ENCODE measurements at regions of chr3 and their contacts with region 1.

Region 1: DNA sequence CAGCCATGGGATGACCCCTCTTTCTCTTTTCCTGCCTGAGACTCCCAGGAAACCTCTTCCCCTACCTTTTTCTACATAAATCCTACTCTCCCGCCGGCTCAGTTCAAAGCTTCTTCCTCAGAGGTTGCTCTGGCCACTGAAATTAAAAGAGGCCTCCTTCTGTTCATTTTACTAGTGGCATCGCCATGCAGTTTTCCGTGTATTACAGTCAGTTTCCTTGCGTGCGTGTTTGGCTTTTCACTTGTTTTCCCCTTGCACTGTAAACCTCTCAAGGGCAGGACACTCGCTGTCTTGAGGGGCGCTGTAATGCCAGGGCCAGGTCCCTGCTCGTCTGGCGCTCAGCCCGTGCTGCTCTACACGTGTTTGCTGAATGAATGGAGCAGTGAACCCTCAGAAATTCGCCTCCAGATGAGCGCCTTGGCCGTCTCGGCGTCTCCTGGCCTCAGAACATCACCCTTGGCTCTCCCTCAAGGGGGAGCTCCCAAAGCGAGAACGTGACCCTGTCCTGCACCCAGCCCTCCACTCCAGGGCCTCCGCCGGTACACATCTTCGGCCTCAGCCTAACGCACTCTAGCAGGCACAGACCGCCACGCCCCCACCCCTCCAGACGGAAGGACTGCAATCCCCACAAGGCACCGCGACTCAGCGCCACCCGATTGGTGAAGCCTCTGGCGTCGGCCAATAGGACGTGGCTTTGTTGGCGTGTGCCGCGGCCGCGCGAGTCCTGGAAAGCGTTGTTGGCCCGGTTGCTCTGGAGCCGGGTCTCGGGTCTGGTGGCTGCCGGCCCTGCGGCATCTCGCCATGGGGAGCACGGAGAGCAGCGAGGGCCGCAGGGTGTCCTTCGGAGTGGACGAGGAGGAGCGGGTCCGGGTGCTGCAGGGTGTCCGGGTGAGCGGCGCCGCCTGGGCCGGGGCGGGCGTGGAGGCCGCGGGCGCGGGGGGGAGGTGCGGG is at the start of gene CHCHD6:
- DNase-seq: peak; percentile 93 to 98 (median 96)
- ATAC-seq: peak; percentile 94
- H3K4me3 ChIP-seq: peak within 1 kb of the TSS; percentile 81
- H3K4me3 Mint-ChIP-seq: peak within 1 kb of the TSS; percentile 98
- H3K27ac ChIP-seq: no peak within 1 kb of the TSS
- H3K27ac Mint-ChIP-seq: peak within 1 kb of the TSS; percentile 70
- H3K4me1 ChIP-seq: peaks cover 19% of the 10 kb centered on the region
- H3K4me1 Mint-ChIP-seq: peaks cover 31% of the 10 kb centered on the region
- H3K27me3 ChIP-seq: peaks cover 0 to 4% of the 10 kb centered on the region in 2 experiments
- H3K27me3 Mint-ChIP-seq: peaks cover 21% of the 10 kb centered on the region
- CTCF ChIP-seq: peak; percentile 25
- total RNA-seq, gene CHCHD6: 8.7 to 9.3 TPM

Region 2: DNA sequence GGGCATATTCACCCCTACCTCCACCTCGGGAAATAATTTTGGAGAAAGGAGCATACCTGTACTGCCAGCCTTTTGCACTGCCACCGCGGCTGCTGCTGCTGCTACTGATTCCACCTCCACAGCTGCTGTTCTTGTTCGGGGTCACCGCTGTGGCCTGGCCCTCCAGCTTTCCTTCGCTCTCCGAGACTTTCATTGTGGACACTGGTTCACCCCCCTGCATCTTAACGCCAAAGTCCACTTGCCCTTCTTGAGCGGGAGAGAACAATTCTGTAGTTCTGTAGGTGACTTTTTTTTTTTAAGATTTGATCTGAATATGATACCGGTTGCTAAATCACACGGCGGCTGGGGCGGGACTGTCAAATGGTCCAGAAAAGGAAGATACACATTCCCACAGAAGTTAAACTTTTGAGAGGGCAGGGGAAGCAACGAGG is 1109.2 kb before region 1 on chr3:
- CTCF ChIA-PET with region 1: no interaction called
- POLR2A ChIA-PET with region 1: no interaction called
- intact Hi-C with region 1: loop called in 1 of 2 experiments (anchors 10 kb)
- DNase-seq: no peak
- ATAC-seq: no peak
- H3K4me3 ChIP-seq: peak overlapping the region; percentile 92
- H3K4me3 Mint-ChIP-seq: peak overlapping the region; percentile 97
- H3K27ac ChIP-seq: peak overlapping the region; percentile 70 to 80
- H3K27ac Mint-ChIP-seq: peak overlapping the region; percentile 84
- H3K4me1 ChIP-seq: peaks cover 45% of the 10 kb centered on the region
- H3K4me1 Mint-ChIP-seq: peaks cover 46% of the 10 kb centered on the region
- H3K27me3 ChIP-seq: no peaks in the 10 kb centered on the region
- H3K27me3 Mint-ChIP-seq: no peaks in the 10 kb centered on the region
- CTCF ChIP-seq: no peak

Region 3: DNA sequence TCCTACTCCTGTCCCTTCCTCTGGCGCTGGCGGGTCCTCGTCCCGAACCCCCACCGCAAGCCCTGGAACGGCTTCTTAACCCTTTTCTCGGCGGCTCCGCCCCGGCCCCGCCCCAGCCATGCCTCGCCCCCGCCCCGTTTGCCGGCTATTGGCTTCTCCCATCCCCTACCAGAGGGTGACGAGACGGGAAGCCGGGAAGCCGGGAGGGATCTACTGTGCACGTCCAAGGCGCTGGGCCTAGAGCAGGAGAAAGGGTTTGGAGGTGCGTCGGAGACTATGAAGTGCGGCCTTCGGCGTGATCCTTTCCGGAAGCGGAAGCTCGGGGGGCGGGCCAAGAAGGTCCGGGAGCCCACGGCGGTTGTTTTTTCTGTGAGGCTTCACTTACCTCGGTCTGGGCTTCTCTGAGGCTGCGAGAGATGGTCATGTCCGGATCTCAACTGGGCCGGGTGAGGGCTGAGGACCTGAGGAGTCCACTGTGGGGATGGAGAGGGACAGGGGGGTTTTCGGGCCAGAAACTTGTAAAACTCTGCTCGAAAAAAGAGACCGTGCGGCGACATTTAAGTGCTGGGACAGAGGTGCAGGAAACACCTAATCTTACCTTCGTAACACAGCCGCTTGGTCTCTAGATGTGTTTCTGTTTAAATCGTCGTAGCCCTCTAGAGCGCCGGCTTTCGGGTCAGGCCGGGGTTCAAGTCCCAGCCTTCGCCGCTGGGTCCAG is 713.4 kb before region 1 on chr3:
- CTCF ChIA-PET with region 1: no interaction called
- POLR2A ChIA-PET with region 1: no interaction called
- intact Hi-C with region 1: loop called in 1 of 2 experiments (anchors 10 kb)
- DNase-seq: peak; percentile 48 to 85 (median 62)
- ATAC-seq: peak; percentile 88
- H3K4me3 ChIP-seq: peak overlapping the region; percentile 91
- H3K4me3 Mint-ChIP-seq: peak overlapping the region; percentile 98
- H3K27ac ChIP-seq: peak overlapping the region; percentile 73 to 87
- H3K27ac Mint-ChIP-seq: peak overlapping the region; percentile 99
- H3K4me1 ChIP-seq: peaks cover 8% of the 10 kb centered on the region
- H3K4me1 Mint-ChIP-seq: peaks cover 53% of the 10 kb centered on the region
- H3K27me3 ChIP-seq: no peaks in the 10 kb centered on the region
- H3K27me3 Mint-ChIP-seq: no peaks in the 10 kb centered on the region
- CTCF ChIP-seq: no peak

Region 4: GRCh38 chr3:126357295-126358037 is 346.3 kb before region 1 on chr3 and contains the start of gene KLF15:
- CTCF ChIA-PET with region 1: no interaction called
- POLR2A ChIA-PET with region 1: no interaction called
- intact Hi-C with region 1: loop called in 1 of 2 experiments (anchors 5 kb)
- DNase-seq: peak; percentile 42 to 88 (median 65)
- ATAC-seq: peak; percentile 91
- H3K4me3 ChIP-seq: peak within 1 kb of the TSS; percentile 65
- H3K4me3 Mint-ChIP-seq: peak within 1 kb of the TSS; percentile 93
- H3K27ac ChIP-seq: no peak within 1 kb of the TSS
- H3K27ac Mint-ChIP-seq: no peak within 1 kb of the TSS
- H3K4me1 ChIP-seq: peaks cover 24% of the 10 kb centered on the region
- H3K4me1 Mint-ChIP-seq: peaks cover 17% of the 10 kb centered on the region
- H3K27me3 ChIP-seq: peaks cover 45 to 49% of the 10 kb centered on the region in 2 experiments
- H3K27me3 Mint-ChIP-seq: peaks cover 58% of the 10 kb centered on the region
- CTCF ChIP-seq: no peak
- total RNA-seq, gene KLF15: 0.30 TPM in 1 of 2 experiments, not detected in the other

Region 5: DNA sequence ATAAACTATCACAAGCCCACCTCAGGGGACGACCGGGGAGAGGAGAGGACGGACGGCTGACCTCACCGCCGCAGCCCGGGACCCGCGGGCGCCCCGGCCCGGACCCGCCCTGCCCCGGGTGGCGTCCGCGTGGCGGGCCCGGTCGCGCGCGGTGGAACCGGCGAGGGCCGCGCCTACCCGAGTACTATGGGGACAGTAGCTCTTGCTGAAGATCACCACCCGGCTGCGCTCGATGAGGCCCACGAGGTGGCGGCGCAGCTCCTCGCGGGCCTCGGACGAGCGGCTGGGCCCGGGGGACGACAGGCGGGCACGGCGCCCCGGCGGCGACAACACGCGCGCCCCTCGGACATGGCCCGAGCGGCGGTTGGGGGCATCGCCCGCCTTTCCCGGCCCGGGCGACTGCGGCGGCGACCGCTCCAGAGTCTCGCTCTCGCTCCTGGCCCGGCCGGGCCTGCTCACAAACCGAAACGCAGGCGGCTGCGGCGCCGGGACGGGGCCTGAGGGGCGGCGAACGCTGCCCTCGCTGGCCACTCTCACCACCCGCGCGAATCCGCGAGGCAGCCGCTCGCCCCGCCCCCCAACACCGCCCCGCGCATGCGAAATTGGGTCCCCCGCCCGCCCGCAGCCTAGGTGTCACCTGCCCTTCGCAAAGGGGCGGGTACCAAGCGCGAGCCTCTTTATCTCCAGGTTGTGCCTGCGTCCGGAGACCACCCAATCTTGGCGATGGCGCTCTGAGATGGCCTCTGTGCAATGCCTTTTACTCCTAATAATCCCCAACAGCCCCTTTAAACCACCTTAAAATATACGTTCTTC is 49.0 kb before region 1 on chr3 and contains the start of gene TXNRD3:
- CTCF ChIA-PET with region 1: no interaction called
- POLR2A ChIA-PET with region 1: no interaction called
- intact Hi-C with region 1: loop called in 1 of 2 experiments (anchors 1 kb)
- DNase-seq: peak; percentile 58 to 86 (median 72)
- ATAC-seq: peak; percentile 90
- H3K4me3 ChIP-seq: peak within 1 kb of the TSS; percentile 48
- H3K4me3 Mint-ChIP-seq: peak within 1 kb of the TSS; percentile 89
- H3K27ac ChIP-seq: no peak within 1 kb of the TSS
- H3K27ac Mint-ChIP-seq: peak within 1 kb of the TSS; percentile 19
- H3K4me1 ChIP-seq: peaks cover 7% of the 10 kb centered on the region
- H3K4me1 Mint-ChIP-seq: peaks cover 11% of the 10 kb centered on the region
- H3K27me3 ChIP-seq: peaks cover 0 to 3% of the 10 kb centered on the region in 2 experiments
- H3K27me3 Mint-ChIP-seq: peaks cover 1% of the 10 kb centered on the region
- CTCF ChIP-seq: no peak
- total RNA-seq, gene TXNRD3: 1.0 to 1.5 TPM

Region 6: DNA sequence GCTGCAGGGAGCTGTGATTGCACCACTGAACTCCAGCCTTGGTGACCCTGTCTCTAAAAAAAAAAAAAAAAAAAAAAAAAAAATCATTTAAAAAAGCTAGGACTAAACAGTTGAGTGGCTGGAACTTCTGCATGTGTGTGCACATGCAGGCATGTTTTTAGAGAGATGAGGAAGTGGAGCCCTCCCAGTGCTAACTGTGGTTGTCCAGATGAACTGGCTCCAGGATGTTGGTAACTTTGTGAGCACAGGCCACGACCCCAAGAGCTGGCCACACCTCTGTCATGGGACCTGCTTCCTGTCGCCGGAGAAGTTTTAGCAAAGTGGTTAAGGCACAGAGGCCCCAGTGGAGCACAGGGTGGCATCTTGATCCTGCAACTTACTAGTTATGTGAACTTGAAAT is 27.3 kb after region 1 on chr3:
- CTCF ChIA-PET with region 1: no interaction called
- POLR2A ChIA-PET with region 1: no interaction called
- intact Hi-C with region 1: no loop called
- DNase-seq: peak in 3 of 14 experiments; percentile 3 to 19 (median 8)
- ATAC-seq: no peak
- H3K4me3 ChIP-seq: no peak overlapping the region
- H3K4me3 Mint-ChIP-seq: no peak overlapping the region
- H3K27ac ChIP-seq: no peak overlapping the region
- H3K27ac Mint-ChIP-seq: no peak overlapping the region
- H3K4me1 ChIP-seq: peaks cover 9% of the 10 kb centered on the region
- H3K4me1 Mint-ChIP-seq: peaks cover 4% of the 10 kb centered on the region
- H3K27me3 ChIP-seq: no peaks in the 10 kb centered on the region
- H3K27me3 Mint-ChIP-seq: no peaks in the 10 kb centered on the region
- CTCF ChIP-seq: no peak

Region 7: DNA sequence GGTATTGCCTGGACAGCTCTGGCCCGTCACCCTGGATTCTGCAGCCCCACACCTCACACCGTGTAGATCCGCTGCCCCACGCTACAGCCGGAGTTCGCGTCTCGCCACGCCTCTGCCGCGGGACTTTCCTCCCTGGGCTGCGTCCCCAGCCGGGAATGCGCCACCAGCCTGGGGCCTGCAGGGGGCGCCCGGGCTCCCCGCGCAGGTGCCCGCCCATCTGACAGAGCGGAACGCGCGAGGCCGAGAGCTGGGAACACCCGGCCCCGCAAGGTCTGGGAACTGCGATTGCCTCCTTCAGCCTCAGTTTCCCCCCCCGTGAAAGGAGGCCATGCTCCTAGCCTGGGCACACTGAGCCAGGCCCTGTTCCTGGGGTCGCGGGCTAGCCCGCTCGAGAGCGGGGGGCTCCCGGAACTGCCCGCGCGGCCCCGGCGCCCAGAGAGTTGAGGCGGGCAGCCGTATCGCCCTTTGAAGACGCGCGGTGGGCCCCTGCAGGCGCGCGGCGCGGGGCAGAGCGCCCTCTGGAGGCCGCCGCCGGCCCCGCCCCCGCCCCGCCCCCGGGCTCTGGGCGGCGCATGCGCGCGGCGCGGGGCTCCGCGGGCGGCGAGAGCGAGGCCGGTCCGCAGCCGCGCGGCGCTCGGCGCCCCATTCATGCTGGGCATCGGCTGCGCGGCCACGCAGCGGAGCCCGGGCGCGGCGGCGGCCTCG is 278.8 kb after region 1 on chr3 and contains the start of gene PLXNA1:
- CTCF ChIA-PET with region 1: interaction called, 4 read pairs
- POLR2A ChIA-PET with region 1: no interaction called
- intact Hi-C with region 1: loop called (anchors 1 kb)
- DNase-seq: peak; percentile 76 to 95 (median 85)
- ATAC-seq: peak; percentile 82
- H3K4me3 ChIP-seq: peak within 1 kb of the TSS; percentile 67
- H3K4me3 Mint-ChIP-seq: peak within 1 kb of the TSS; percentile 89
- H3K27ac ChIP-seq: peak within 1 kb of the TSS; percentile 88 to 90
- H3K27ac Mint-ChIP-seq: peak within 1 kb of the TSS; percentile 93
- H3K4me1 ChIP-seq: peaks cover 30% of the 10 kb centered on the region
- H3K4me1 Mint-ChIP-seq: peaks cover 15% of the 10 kb centered on the region
- H3K27me3 ChIP-seq: peaks cover 0 to 5% of the 10 kb centered on the region in 2 experiments
- H3K27me3 Mint-ChIP-seq: peaks cover 10% of the 10 kb centered on the region
- CTCF ChIP-seq: peak; percentile 99
- total RNA-seq, gene PLXNA1: 9.8 to 10.6 TPM

Region 8: DNA sequence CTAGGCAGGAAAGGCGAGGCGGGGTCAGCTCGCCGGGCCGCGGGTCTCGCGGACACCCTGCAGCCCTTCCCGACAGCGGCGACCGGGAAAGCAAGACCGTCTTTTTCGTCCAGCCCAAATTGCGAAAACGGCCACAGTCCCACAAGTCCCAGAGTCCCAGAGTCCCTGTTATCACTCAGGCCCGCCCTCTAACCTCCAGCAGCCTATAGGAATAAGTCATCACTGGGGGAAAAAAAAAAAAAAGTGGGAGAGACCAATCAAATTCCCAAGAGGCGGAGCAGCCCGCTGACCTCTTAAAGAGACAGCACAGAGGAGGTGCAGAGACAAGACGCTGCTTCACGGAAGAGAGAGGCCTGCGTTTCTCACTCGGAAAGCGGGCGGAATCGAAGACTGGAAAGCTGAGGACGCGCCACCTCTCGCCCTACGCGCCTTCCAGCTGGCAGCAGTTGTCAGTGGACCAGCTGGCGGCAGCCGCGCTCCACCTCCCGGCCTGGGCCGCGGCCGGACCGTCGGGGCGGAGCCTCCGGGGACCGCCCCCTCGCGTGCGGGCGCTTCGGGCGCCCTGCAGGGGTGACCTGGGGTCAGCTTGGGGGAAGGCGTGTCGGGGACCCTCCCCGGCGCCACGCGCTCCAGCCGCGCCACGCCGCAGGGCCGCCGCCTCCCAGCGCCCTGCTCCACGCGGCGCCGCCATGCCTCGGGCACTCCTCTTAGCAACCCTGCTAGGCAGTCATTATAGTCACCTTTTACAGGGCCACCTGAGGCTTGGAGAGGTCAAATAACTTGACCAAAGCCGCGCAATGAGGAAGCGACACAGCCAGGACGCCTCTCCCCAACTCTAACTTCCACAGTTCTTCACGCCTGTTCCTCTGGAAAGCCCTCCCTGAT is 887.0 kb after region 1 on chr3 and contains the start of gene TPRA1:
- CTCF ChIA-PET with region 1: no interaction called
- POLR2A ChIA-PET with region 1: no interaction called
- intact Hi-C with region 1: loop called in 1 of 2 experiments (anchors 2 kb)
- DNase-seq: peak; percentile 51 to 93 (median 74)
- ATAC-seq: peak; percentile 89
- H3K4me3 ChIP-seq: peak within 1 kb of the TSS; percentile 71
- H3K4me3 Mint-ChIP-seq: peak within 1 kb of the TSS; percentile 99
- H3K27ac ChIP-seq: peak within 1 kb of the TSS; percentile 54 to 82
- H3K27ac Mint-ChIP-seq: peak within 1 kb of the TSS; percentile 93
- H3K4me1 ChIP-seq: peaks cover 36% of the 10 kb centered on the region
- H3K4me1 Mint-ChIP-seq: peaks cover 43% of the 10 kb centered on the region
- H3K27me3 ChIP-seq: no peaks in the 10 kb centered on the region
- H3K27me3 Mint-ChIP-seq: no peaks in the 10 kb centered on the region
- CTCF ChIP-seq: no peak
- total RNA-seq, gene TPRA1: 7.5 to 7.8 TPM

Region 9: GRCh38 chr3:128487813-128488635 is 1784.2 kb after region 1 on chr3:
- CTCF ChIA-PET with region 1: no interaction called
- POLR2A ChIA-PET with region 1: no interaction called
- intact Hi-C with region 1: no loop called
- DNase-seq: peak in 2 of 14 experiments; percentile 45 to 51
- ATAC-seq: peak; percentile 28
- H3K4me3 ChIP-seq: peak overlapping the region; percentile 48
- H3K4me3 Mint-ChIP-seq: peak overlapping the region; percentile 80
- H3K27ac ChIP-seq: no peak overlapping the region
- H3K27ac Mint-ChIP-seq: no peak overlapping the region
- H3K4me1 ChIP-seq: peaks cover 79% of the 10 kb centered on the region
- H3K4me1 Mint-ChIP-seq: peaks cover 49% of the 10 kb centered on the region
- H3K27me3 ChIP-seq: peaks cover 83 to 98% of the 10 kb centered on the region in 2 experiments
- H3K27me3 Mint-ChIP-seq: peaks cover 78% of the 10 kb centered on the region
- CTCF ChIP-seq: no peak

Measured in CD4-positive, alpha-beta T cell (primary cell).